ENCODE measurements at regions of chr12 and their contacts with region 1.

Region 1: DNA sequence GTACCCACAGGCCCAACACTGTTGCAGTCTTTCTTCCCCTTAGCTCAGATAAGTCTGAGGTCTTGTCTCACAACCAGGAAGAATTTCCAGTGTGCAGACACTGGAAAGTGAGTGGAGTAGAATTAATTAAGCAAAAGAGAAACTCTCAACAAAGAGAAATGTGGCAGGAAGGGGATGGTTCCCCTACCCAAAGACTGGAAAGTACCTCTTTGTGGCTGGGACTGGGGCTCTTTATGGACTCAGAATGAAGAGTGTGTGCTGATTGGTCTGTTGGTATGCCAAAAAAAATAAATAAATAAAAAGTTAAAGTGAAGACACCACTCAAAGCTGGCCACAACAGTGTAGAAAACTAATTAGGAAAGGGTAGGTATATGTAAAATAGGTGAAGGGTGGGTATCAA is 26.4 kb downstream of the GLIPR1L1 start:
- DNase-seq: no peak
- ATAC-seq: peak; percentile 54
- H3K4me3 ChIP-seq: no peak overlapping the region
- H3K4me3 Mint-ChIP-seq: peak overlapping the region in 1 of 10 donors; percentile 8
- H3K27ac ChIP-seq: no peak overlapping the region
- H3K27ac Mint-ChIP-seq: peak overlapping the region in 1 of 9 donors; percentile 58
- H3K4me1 ChIP-seq: no peaks in the 10 kb centered on the region
- H3K4me1 Mint-ChIP-seq: peaks cover 0 to 14% (median 4%) of the 10 kb centered on the region in 7 donors
- H3K27me3 ChIP-seq: no peaks in the 10 kb centered on the region
- H3K27me3 Mint-ChIP-seq: no peaks in the 10 kb centered on the region

Region 2: GRCh38 chr12:75334384-75335030 is 26.4 kb before region 1 on chr12 and contains the start of gene GLIPR1L1:
- CTCF ChIA-PET with region 1: no interaction called
- POLR2A ChIA-PET with region 1: no interaction called
- intact Hi-C with region 1: no loop called
- DNase-seq: peak; percentile 58 to 79 (median 74)
- ATAC-seq: peak; percentile 91
- H3K4me3 ChIP-seq: no peak within 1 kb of the TSS
- H3K4me3 Mint-ChIP-seq: peak within 1 kb of the TSS; percentile 18 to 80 (median 74)
- H3K27ac ChIP-seq: no peak within 1 kb of the TSS
- H3K27ac Mint-ChIP-seq: peak within 1 kb of the TSS in 1 of 9 donors; percentile 3
- H3K4me1 ChIP-seq: peaks cover 0 to 5% of the 10 kb centered on the region in 2 donors
- H3K4me1 Mint-ChIP-seq: peaks cover 11 to 29% (median 18%) of the 10 kb centered on the region in 7 donors
- H3K27me3 ChIP-seq: peaks cover 0 to 6% of the 10 kb centered on the region in 2 donors
- H3K27me3 Mint-ChIP-seq: peaks cover 16 to 56% (median 31%) of the 10 kb centered on the region in 5 donors
- total RNA-seq, gene GLIPR1L1: not detected

Region 3: GRCh38 chr12:75345531-75345930 is 15.4 kb before region 1 on chr12:
- CTCF ChIA-PET with region 1: no interaction called
- POLR2A ChIA-PET with region 1: no interaction called
- intact Hi-C with region 1: loop called in 1 of 2 experiments (anchors 2 kb)
- DNase-seq: no peak
- ATAC-seq: no peak
- H3K4me3 ChIP-seq: no peak overlapping the region
- H3K4me3 Mint-ChIP-seq: no peak overlapping the region
- H3K27ac ChIP-seq: no peak overlapping the region
- H3K27ac Mint-ChIP-seq: no peak overlapping the region
- H3K4me1 ChIP-seq: no peaks in the 10 kb centered on the region
- H3K4me1 Mint-ChIP-seq: peaks cover 0 to 10% (median 0%) of the 10 kb centered on the region in 7 donors
- H3K27me3 ChIP-seq: no peaks in the 10 kb centered on the region
- H3K27me3 Mint-ChIP-seq: peaks cover 0 to 21% (median 5%) of the 10 kb centered on the region in 5 donors